ENCODE measurements at regions of chr7 and their contacts with region 1.

Region 1: GRCh38 chr7:134865001-134865845 is 85.8 kb downstream of the CALD1 start:
- DNase-seq: no peak
- H3K4me3 ChIP-seq: no peak overlapping the region
- H3K27ac ChIP-seq: peak overlapping the region; percentile 68
- H3K4me1 ChIP-seq: peaks cover 44% of the 10 kb centered on the region
- H3K27me3 ChIP-seq: no peaks in the 10 kb centered on the region
- CTCF ChIP-seq: no peak
- POLR2A ChIP-seq: no peak

Region 2: DNA sequence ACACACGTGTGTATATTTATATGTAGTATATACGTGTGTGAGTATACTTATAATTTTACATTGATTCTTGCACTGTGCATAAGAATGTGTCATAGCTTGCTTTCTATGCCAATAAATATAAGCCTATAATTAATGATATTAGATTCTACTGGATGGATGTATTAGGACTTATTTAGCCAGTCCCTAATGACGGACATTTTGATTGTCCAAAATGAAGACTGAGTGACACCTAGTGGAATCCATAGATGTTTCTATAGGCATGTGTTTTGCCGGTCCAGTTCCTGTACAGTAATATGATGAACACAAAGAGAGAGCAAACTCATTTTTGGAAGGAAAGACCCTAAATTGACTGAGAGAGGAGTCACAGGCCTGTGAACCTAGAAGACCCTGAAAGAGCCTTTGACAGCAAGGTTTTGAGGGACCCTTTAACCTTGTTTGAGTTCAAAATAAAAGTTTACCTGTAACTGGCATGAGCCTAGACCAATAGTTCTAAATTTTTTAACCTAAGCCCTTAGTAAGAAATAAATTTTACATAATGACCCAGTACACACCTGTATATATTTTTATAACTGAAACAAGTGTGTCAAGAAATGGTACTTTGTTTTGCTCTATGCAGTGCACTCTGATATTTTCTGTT is 78.7 kb after region 1 on chr7:
- CTCF ChIA-PET with region 1: no interaction called
- POLR2A ChIA-PET with region 1: no interaction called
- dilution Hi-C with region 1: no loop called
- intact Hi-C with region 1: loop called (anchors 5 kb)
- DNase-seq: peak; percentile 55
- H3K4me3 ChIP-seq: no peak overlapping the region
- H3K27ac ChIP-seq: no peak overlapping the region
- H3K4me1 ChIP-seq: peaks cover 11% of the 10 kb centered on the region
- H3K27me3 ChIP-seq: no peaks in the 10 kb centered on the region
- CTCF ChIP-seq: peak; percentile 13 to 21
- POLR2A ChIP-seq: no peak

Measured in endothelial cell of umbilical vein (primary cell).